ENCODE measurements at regions of chr2 and their contacts with region 1.

Region 1: DNA sequence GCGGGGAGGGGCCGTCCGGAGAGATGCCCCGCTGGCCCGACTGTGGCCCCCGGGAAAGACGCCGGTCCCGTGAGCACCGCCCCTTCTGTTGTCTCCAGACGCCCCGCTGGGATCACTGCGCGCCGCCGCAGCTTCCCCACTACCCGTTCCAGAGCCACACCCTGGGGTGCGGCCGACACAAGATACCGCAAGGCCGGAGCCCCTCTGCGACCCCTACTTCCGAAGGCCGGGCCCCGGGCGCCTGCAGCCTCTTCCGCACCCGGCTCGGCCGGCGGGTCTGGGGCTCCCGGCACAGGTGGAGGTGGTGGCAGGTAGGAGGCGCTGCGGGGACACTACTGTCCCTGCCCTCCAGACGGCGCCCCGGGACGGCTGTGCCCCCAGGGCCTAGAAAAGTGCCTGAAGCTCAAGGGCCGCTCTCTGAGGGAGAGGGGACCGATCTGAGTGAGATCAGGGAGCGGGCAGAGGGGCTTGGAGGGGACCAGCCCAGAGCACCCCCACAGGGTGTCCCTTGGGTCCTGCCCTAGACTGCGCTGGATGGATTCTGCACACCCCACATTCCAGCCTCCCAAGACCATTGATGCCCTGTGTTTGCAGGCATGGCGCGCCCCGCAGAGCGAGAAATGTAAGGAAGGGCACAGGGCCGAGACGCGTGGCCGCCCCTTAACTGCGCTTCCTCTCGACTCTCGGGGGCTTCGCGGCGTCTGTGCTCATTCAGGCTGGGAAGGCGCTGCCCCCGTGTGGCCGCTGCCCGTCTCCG is 80.0 kb downstream of the GFPT1 start:
- DNase-seq: peak; percentile 89 to 95 (median 94)
- ATAC-seq: peak; percentile 90 to 92
- H3K4me3 ChIP-seq: peak overlapping the region; percentile 60
- H3K27ac ChIP-seq: peak overlapping the region; percentile 74
- H3K4me1 ChIP-seq: peaks cover 6% of the 10 kb centered on the region
- H3K27me3 ChIP-seq: no peaks in the 10 kb centered on the region

Region 2: DNA sequence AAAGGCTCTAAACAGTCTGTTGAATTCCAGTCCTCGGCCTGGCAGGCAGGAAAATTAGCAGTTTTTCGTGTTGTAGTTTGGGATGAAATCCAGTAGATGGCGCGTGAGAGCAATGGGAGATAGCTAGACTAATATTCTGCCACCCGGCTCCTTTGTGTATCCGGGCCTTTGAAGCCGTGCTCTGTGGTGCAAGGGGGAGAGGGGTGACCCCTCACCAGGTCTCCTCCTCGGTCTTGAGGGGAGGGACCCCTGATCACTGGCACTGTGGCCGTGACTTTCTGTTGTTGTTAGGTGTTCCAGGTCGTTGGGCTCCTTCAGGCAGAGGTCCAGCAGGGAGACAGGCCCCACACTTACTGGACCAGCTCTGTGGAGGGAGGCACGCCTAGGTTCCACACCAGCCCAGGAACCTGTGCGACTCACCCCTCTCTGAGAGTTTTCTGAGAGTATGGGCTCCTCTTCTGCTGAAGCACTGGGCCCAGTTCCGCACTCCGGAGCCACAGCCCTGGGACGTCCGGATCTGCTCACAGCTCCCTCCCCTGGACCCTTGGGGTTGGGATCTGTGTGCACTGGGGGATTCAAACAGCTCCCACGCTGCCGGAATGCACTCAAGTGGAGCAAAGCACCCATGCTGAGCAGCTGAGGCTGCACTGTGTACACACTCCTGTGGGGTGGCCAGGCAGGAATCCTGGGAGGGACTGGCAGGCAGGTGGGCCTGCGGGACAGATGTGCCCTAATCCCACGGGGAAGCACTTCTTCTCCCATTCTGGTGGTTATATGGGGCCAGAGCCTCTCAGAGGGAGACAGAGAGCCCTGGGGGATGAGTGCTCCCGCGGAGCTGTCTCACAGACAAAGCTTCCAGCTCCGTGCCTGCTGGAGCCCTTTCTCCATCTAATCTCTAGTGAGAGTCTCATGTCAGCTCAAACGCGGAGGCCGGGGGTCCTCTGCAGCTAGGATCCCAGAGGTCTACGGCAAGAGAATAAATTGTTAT is 363.1 kb before region 1 on chr2:
- intact Hi-C with region 1: loop called in 3 of 4 experiments (anchors 5 to 10 kb)
- DNase-seq: peak; percentile 24 to 58 (median 57)
- ATAC-seq: peak; percentile 79 to 87
- H3K4me3 ChIP-seq: no peak overlapping the region
- H3K27ac ChIP-seq: no peak overlapping the region
- H3K4me1 ChIP-seq: no peaks in the 10 kb centered on the region
- H3K27me3 ChIP-seq: no peaks in the 10 kb centered on the region

Region 3: DNA sequence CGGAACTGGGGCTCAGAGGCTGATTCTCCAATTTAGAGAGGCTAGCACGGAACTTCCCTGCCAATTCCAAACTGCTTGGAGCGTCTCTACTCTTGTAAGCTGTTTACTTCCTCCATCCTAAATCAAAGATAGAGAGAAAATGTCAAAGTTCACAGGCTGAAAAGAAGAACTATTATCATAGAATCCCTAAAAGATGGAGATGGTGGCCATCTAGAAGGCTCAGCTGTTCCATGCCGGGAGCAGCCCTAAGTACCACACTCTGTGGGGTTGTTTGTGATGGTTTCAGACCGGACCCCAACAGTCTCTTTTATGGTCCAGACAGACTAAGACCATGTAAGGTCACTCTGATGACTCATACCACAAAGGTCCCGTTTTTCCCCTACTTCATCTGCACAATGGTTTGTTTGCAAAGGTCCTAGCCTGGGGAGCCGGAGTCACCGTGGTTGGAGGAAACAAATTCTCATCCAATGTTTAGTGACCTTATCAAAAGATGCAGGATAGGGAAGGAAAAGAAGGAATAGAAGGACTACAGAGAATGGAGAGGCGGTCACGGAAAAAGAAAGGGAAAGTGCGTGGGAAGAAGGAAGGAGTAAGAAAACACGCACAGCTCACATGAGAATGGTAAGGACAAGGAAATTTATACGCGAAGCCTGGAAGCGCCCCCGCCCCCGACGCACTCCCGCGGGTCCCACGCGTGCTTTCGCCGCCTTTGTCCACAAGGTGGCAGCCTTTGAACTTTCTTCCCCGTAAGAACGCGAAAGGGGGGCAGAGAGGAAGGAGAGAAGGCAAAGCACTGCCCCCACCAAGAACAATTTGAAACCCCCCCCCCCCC is 294.5 kb before region 1 on chr2:
- intact Hi-C with region 1: loop called in 3 of 4 experiments (anchors 5 kb)
- DNase-seq: peak; percentile 61 to 91 (median 89)
- ATAC-seq: peak; percentile 67 to 75
- H3K4me3 ChIP-seq: peak overlapping the region; percentile 54
- H3K27ac ChIP-seq: no peak overlapping the region
- H3K4me1 ChIP-seq: peaks cover 5% of the 10 kb centered on the region
- H3K27me3 ChIP-seq: no peaks in the 10 kb centered on the region

Region 4: GRCh38 chr2:69026026-69026425 is 281.0 kb before region 1 on chr2:
- intact Hi-C with region 1: loop called in 3 of 4 experiments (anchors 5 kb)
- DNase-seq: no peak
- ATAC-seq: peak; percentile 55 to 84
- H3K4me3 ChIP-seq: no peak overlapping the region
- H3K27ac ChIP-seq: no peak overlapping the region
- H3K4me1 ChIP-seq: peaks cover 2% of the 10 kb centered on the region
- H3K27me3 ChIP-seq: no peaks in the 10 kb centered on the region

Region 5: GRCh38 chr2:69033461-69034095 is 273.4 kb before region 1 on chr2:
- intact Hi-C with region 1: loop called in 3 of 4 experiments (anchors 5 kb)
- DNase-seq: no peak
- ATAC-seq: peak; percentile 51 to 82
- H3K4me3 ChIP-seq: no peak overlapping the region
- H3K27ac ChIP-seq: no peak overlapping the region
- H3K4me1 ChIP-seq: peaks cover 3% of the 10 kb centered on the region
- H3K27me3 ChIP-seq: no peaks in the 10 kb centered on the region

Region 6: DNA sequence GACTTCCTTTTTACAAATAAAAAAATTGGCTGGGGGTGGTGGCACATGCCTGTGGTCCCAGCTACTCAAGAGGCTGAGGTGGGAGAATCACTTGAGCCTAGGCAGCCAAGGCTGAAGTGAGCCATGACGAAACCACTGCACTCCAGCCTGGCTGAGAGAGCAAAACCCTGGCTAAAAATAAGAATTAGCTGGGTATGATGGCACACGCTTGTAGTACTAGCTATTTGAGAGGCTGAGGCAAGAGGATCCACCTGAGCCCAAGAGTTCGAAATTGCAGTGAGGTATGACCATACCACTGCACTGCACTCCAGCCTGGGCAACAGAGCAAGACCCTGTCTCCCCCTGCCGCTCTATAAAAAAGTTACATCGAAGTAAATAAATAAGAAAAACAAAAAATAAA is 46.4 kb after region 1 on chr2:
- intact Hi-C with region 1: no loop called
- DNase-seq: no peak
- ATAC-seq: no peak
- H3K4me3 ChIP-seq: no peak overlapping the region
- H3K27ac ChIP-seq: no peak overlapping the region
- H3K4me1 ChIP-seq: no peaks in the 10 kb centered on the region
- H3K27me3 ChIP-seq: no peaks in the 10 kb centered on the region